Gastrocnemius medialis (tissue), 4 donors: ENCODE measurements at regions of chr2 and their contacts with region 1.

Region 1: GRCh38 chr2:106582148-106583143 is 95.3 kb downstream of the CD8B2 start:
- DNase-seq: peak; percentile 56 to 59
- ATAC-seq: peak; percentile 93 to 95
- H3K4me3 ChIP-seq: peak overlapping the region; percentile 34 to 45 (median 42)
- H3K27ac ChIP-seq: no peak overlapping the region
- H3K4me1 ChIP-seq: peaks cover 0 to 7% of the 10 kb centered on the region in 2 donors
- H3K27me3 ChIP-seq: peaks cover 0 to 25% (median 14%) of the 10 kb centered on the region in 3 donors
- CTCF ChIP-seq: peak; percentile 60 to 87 (median 69)
- POLR2A ChIP-seq: no peak

Region 2: GRCh38 chr2:106104332-106105062 is 477.9 kb before region 1 on chr2:
- in situ Hi-C with region 1: no loop called
- intact Hi-C with region 1: loop called (anchors 1 kb)
- DNase-seq: peak in 1 of 2 donors; percentile 41
- ATAC-seq: peak; percentile 55 to 59
- H3K4me3 ChIP-seq: no peak overlapping the region
- H3K27ac ChIP-seq: no peak overlapping the region
- H3K4me1 ChIP-seq: peaks cover 6 to 10% of the 10 kb centered on the region in 2 donors
- H3K27me3 ChIP-seq: no peaks in the 10 kb centered on the region
- CTCF ChIP-seq: peak; percentile 78 to 96 (median 89)
- POLR2A ChIP-seq: no peak

Region 3: GRCh38 chr2:106562268-106563186 is 19.9 kb before region 1 on chr2:
- in situ Hi-C with region 1: no loop called
- intact Hi-C with region 1: loop called (anchors 2 kb)
- DNase-seq: no peak
- ATAC-seq: no peak
- H3K4me3 ChIP-seq: no peak overlapping the region
- H3K27ac ChIP-seq: peak overlapping the region in 2 of 4 donors; percentile 6 to 23
- H3K4me1 ChIP-seq: peaks cover 6 to 14% of the 10 kb centered on the region in 2 donors
- H3K27me3 ChIP-seq: no peaks in the 10 kb centered on the region
- CTCF ChIP-seq: no peak
- POLR2A ChIP-seq: no peak

Region 4: GRCh38 chr2:106944215-106944614 is 361.8 kb after region 1 on chr2:
- in situ Hi-C with region 1: no loop called
- intact Hi-C with region 1: no loop called
- DNase-seq: no peak
- ATAC-seq: no peak
- H3K4me3 ChIP-seq: no peak overlapping the region
- H3K27ac ChIP-seq: no peak overlapping the region
- H3K4me1 ChIP-seq: no peaks in the 10 kb centered on the region
- H3K27me3 ChIP-seq: no peaks in the 10 kb centered on the region
- CTCF ChIP-seq: no peak
- POLR2A ChIP-seq: no peak